B cell (primary cell): ENCODE measurements at regions of chr12 and their contacts with region 1.

Region 1: GRCh38 chr12:50572271-50572670 is 67.5 kb downstream of the DIP2B start:
- DNase-seq: no peak
- ATAC-seq: no peak
- H3K4me3 ChIP-seq: no peak overlapping the region
- H3K4me3 Mint-ChIP-seq: no peak overlapping the region
- H3K27ac ChIP-seq: no peak overlapping the region
- H3K27ac Mint-ChIP-seq: no peak overlapping the region
- H3K4me1 ChIP-seq: peaks cover 23 to 29% of the 10 kb centered on the region in 2 donors
- H3K4me1 Mint-ChIP-seq: peaks cover 54% of the 10 kb centered on the region
- H3K27me3 ChIP-seq: no peaks in the 10 kb centered on the region
- H3K27me3 Mint-ChIP-seq: no peaks in the 10 kb centered on the region
- CTCF ChIP-seq: no peak

Region 2: GRCh38 chr12:50127546-50127945 is 444.7 kb before region 1 on chr12:
- CTCF ChIA-PET with region 1: no interaction called
- POLR2A ChIA-PET with region 1: no interaction called
- intact Hi-C with region 1: no loop called
- DNase-seq: no peak
- ATAC-seq: no peak
- H3K4me3 ChIP-seq: no peak overlapping the region
- H3K4me3 Mint-ChIP-seq: no peak overlapping the region
- H3K27ac ChIP-seq: no peak overlapping the region
- H3K27ac Mint-ChIP-seq: peak overlapping the region; percentile 16
- H3K4me1 ChIP-seq: peaks cover 7 to 10% of the 10 kb centered on the region in 2 donors
- H3K4me1 Mint-ChIP-seq: peaks cover 25% of the 10 kb centered on the region
- H3K27me3 ChIP-seq: no peaks in the 10 kb centered on the region
- H3K27me3 Mint-ChIP-seq: no peaks in the 10 kb centered on the region
- CTCF ChIP-seq: no peak

Region 3: GRCh38 chr12:50517456-50518048 is 54.7 kb before region 1 on chr12:
- CTCF ChIA-PET with region 1: interaction called, 3 read pairs
- POLR2A ChIA-PET with region 1: no interaction called
- intact Hi-C with region 1: loop called (anchors 10 kb)
- DNase-seq: peak; percentile 86
- ATAC-seq: peak; percentile 70
- H3K4me3 ChIP-seq: peak overlapping the region in 4 of 5 experiments; percentile 27 to 55 (median 38)
- H3K4me3 Mint-ChIP-seq: no peak overlapping the region
- H3K27ac ChIP-seq: peak overlapping the region; percentile 82 to 85
- H3K27ac Mint-ChIP-seq: no peak overlapping the region
- H3K4me1 ChIP-seq: peaks cover 86 to 97% of the 10 kb centered on the region in 2 donors
- H3K4me1 Mint-ChIP-seq: peaks cover 57% of the 10 kb centered on the region
- H3K27me3 ChIP-seq: no peaks in the 10 kb centered on the region
- H3K27me3 Mint-ChIP-seq: no peaks in the 10 kb centered on the region
- CTCF ChIP-seq: no peak

Region 4: DNA sequence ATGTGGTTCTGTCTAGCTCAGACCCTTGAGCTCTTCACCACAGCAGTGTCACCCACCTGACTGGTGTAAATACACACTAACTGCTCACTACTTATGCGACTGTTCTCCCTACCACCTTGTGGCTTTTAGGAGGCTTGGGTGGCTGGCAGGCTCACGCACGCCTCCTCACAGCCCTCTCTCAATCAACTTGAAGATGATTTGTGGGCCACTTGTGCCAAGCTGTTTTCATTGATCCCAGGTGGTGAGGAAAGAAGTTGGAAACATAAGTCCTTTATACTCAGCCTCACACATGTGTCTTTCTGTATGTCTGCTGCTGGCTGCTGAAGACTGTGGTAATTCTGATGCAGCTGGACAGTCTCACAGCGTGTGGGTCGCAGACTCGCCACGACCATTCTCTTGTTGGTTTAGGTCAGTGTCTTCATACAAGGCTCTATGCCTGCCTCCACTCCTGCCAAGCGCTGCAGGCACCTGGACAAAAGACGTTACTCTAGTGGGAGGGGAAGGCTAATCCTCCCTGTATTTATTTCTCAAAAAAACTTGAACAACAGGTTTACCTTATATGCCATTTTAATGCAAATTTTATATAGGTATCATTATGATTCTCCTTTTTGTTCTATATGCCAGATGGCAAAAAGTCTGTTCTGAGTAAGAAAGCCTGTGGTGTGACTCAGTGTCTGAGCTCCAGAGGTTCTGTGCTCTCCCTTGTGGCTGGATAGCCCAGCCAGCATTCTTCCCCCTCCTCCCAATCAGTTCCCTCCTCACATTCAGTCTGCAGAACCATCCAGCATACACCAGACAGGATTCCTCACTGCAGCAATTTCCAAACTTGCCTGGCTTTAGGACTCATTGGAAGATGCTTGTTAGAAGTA is 48.1 kb after region 1 on chr12:
- CTCF ChIA-PET with region 1: no interaction called
- POLR2A ChIA-PET with region 1: no interaction called
- intact Hi-C with region 1: loop called (anchors 10 kb)
- DNase-seq: no peak
- ATAC-seq: no peak
- H3K4me3 ChIP-seq: no peak overlapping the region
- H3K4me3 Mint-ChIP-seq: no peak overlapping the region
- H3K27ac ChIP-seq: peak overlapping the region in 1 of 2 donors; percentile 70
- H3K27ac Mint-ChIP-seq: peak overlapping the region; percentile 47
- H3K4me1 ChIP-seq: peaks cover 29% of the 10 kb centered on the region in 2 donors
- H3K4me1 Mint-ChIP-seq: peaks cover 62% of the 10 kb centered on the region
- H3K27me3 ChIP-seq: no peaks in the 10 kb centered on the region
- H3K27me3 Mint-ChIP-seq: no peaks in the 10 kb centered on the region
- CTCF ChIP-seq: no peak